Heart left ventricle (tissue), 16 donors: ENCODE measurements at regions of chr7 and their contacts with region 1.

Region 1: DNA sequence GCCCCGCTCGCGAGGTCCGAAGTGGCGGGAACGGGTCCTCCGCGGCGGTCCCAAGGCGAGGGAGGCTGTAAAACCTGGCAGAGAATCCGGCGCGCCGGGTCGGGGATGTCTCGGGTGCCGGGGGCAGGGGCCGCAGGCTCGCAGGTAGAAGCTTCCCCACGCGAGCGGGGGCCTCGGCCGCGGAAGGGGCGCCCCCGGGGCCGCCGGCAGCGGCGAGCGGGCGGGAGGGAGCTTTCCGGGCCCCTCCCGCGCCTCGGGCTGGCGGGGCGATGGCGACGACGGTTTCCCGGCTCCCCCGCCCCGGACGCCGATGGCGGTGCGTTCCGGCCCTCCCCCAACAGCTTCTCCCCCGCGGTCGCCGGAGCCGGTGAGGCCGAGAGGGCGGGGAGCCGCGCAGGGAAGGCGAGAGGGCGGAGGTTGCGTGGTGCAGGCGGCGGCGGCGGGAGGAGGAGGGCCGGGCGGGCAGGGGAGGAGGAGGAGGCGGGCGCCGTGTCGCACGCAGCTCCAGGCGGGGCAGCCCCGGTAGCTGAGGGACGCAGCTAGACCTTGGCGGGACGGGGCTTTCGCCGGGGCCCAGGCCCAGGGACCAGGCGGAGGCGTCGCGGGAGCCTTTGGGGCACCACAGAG is at the start of gene CUL1:
- DNase-seq: peak; percentile 90 to 94 (median 91)
- ATAC-seq: peak; percentile 77 to 95 (median 88)
- H3K4me3 ChIP-seq: peak within 1 kb of the TSS; percentile 76 to 98 (median 87)
- H3K27ac ChIP-seq: peak within 1 kb of the TSS; percentile 92 to 99 (median 97)
- H3K4me1 ChIP-seq: peaks cover 9 to 47% (median 36%) of the 10 kb centered on the region in 12 donors
- H3K27me3 ChIP-seq: no peaks in the 10 kb centered on the region
- CTCF ChIP-seq: peak in 1 of 12 donors; percentile 2
- POLR2A ChIP-seq: peak in 1 of 2 donors; percentile 57
- total RNA-seq, gene CUL1: 39.8 to 58.3 (median 43.6) TPM

Region 2: DNA sequence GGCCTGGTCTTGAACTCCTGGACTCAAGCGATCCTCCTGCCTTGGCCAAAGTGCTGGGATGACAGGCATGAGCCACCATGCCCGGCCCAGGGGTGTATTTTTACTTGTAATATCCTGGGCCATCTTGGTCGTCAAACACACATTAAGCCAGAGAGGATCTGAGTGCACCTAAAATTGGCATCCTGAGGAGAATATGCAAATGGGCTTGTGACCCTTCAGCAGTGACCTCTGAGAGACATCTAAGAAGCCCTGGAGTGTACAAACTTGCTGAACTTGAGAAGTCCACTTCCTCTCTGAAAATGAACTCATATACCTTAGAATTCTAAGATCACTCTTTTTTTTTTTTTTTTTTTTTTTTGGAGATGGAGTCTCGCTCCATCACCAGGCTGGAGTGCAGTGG is 479.9 kb before region 1 on chr7:
- intact Hi-C with region 1: no loop called
- DNase-seq: no peak
- ATAC-seq: no peak
- H3K4me3 ChIP-seq: no peak overlapping the region
- H3K27ac ChIP-seq: no peak overlapping the region
- H3K4me1 ChIP-seq: no peaks in the 10 kb centered on the region
- H3K27me3 ChIP-seq: peaks cover 0 to 3% (median 0%) of the 10 kb centered on the region in 9 donors
- CTCF ChIP-seq: no peak
- POLR2A ChIP-seq: no peak

Region 3: GRCh38 chr7:148575640-148576411 is 122.7 kb before region 1 on chr7:
- intact Hi-C with region 1: loop called in 2 of 10 experiments (anchors 5 to 10 kb)
- DNase-seq: peak; percentile 43 to 73 (median 59)
- ATAC-seq: peak in 3 of 4 donors; percentile 62 to 70 (median 68)
- H3K4me3 ChIP-seq: no peak overlapping the region
- H3K27ac ChIP-seq: no peak overlapping the region
- H3K4me1 ChIP-seq: peaks cover 0 to 9% (median 0%) of the 10 kb centered on the region in 12 donors
- H3K27me3 ChIP-seq: no peaks in the 10 kb centered on the region
- CTCF ChIP-seq: peak; percentile 68 to 86 (median 78)
- POLR2A ChIP-seq: no peak

Region 4: DNA sequence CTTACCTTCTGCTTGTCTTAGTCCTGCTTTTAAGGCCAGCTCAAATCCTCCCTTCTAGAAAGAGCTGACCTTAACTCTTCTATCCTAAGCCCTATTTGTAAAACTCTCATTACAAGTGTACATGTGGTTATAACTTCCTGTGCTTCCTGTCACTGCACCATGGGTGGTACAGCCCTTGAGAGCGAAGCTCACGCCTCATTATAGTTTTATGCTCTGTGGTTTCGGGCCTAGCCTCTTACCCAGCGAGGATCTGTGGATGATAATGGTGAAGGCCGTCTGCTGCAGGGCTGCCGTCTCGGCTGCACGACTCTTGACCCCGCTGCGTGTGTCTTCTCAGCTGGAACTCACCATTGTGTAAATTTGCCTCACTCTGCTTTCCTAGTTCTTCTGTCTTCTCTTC is 74.8 kb after region 1 on chr7:
- intact Hi-C with region 1: loop called in 2 of 10 experiments (anchors 5 to 10 kb)
- DNase-seq: no peak
- ATAC-seq: peak in 1 of 4 donors; percentile 24
- H3K4me3 ChIP-seq: no peak overlapping the region
- H3K27ac ChIP-seq: peak overlapping the region in 1 of 12 donors; percentile 49
- H3K4me1 ChIP-seq: peaks cover 0 to 10% (median 0%) of the 10 kb centered on the region in 12 donors
- H3K27me3 ChIP-seq: no peaks in the 10 kb centered on the region
- CTCF ChIP-seq: no peak
- POLR2A ChIP-seq: no peak

Region 5: DNA sequence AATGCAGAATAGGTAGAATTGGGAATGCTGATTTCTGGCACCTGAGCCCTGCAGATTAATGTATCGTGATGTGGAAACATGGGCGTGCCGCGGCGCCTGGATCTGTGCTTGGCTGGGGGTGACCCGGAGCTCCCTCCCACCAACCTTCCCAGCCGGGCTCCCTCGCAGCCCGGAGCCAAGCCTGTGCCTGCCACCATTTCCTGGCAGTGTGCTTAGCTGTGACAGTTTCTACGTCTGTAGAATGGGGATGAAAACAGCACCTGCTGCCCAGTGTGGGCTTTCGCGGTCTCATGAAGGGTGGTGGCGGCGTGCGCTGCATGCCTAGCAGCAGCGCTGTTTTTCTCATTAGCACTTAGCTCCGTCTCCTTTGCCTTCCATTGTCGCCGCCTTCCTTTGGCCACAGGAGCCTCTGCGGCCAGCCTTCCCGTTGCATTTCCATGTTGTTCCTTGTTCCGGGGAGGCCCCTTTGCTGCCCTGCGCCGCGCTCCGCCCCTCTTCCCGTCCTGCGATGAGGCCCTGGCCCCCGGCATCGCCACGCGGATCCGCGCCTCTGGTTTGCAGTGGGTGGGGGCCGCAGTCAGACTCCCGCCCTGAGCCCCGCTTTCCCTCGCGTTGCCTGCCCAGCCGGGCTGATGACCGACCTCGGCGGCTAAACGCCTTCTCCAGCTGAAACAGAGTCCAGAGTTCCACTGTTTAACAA is 84.4 kb after region 1 on chr7:
- intact Hi-C with region 1: loop called in 3 of 10 experiments (anchors 5 to 10 kb)
- DNase-seq: no peak
- ATAC-seq: no peak
- H3K4me3 ChIP-seq: no peak overlapping the region
- H3K27ac ChIP-seq: no peak overlapping the region
- H3K4me1 ChIP-seq: no peaks in the 10 kb centered on the region
- H3K27me3 ChIP-seq: no peaks in the 10 kb centered on the region
- CTCF ChIP-seq: no peak
- POLR2A ChIP-seq: no peak

Region 6: DNA sequence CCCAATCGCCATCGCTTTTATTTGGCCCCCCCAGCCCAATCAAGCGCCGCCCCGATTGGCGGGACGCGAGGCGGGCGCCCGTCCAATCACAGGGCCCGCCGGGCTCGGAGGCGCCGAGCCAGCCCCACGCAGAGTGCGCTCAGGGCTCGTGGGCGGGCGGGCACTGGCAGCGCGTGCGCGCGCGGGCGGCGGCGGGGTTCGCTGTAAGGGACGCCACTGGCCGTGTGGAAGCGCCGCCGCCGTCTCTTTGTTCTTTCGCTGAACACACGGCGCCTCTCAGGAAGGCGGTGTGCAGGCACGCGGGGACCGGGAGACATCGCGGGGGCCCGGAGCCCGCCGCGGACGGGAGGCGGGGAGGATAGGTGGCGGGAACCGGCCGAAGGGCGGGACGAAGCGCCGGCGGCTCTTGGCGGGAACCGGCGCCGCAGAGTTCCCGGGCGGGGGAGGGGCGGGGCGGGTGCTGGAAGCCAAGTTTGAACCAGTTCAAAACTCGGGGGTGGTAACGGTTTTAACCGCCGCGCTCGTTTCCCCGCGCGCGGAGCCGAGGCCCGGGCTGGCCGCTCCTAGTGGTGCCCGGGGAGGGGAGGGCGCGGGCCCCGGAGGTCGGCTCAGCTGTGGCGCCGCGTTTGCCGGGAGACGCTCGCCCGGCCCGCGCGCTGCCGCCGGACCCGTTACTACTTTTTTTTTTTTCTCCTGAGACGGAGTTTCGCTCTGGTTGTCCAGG is 186.0 kb after region 1 on chr7:
- intact Hi-C with region 1: loop called in 2 of 10 experiments (anchors 2 to 5 kb)
- DNase-seq: peak; percentile 93 to 97 (median 94)
- ATAC-seq: peak; percentile 98 to 100 (median 99)
- H3K4me3 ChIP-seq: peak overlapping the region; percentile 65 to 99 (median 93)
- H3K27ac ChIP-seq: peak overlapping the region; percentile 77 to 98 (median 92)
- H3K4me1 ChIP-seq: peaks cover 0 to 17% (median 4%) of the 10 kb centered on the region in 12 donors
- H3K27me3 ChIP-seq: no peaks in the 10 kb centered on the region
- CTCF ChIP-seq: no peak
- POLR2A ChIP-seq: peak in 1 of 2 donors; percentile 83

Region 7: DNA sequence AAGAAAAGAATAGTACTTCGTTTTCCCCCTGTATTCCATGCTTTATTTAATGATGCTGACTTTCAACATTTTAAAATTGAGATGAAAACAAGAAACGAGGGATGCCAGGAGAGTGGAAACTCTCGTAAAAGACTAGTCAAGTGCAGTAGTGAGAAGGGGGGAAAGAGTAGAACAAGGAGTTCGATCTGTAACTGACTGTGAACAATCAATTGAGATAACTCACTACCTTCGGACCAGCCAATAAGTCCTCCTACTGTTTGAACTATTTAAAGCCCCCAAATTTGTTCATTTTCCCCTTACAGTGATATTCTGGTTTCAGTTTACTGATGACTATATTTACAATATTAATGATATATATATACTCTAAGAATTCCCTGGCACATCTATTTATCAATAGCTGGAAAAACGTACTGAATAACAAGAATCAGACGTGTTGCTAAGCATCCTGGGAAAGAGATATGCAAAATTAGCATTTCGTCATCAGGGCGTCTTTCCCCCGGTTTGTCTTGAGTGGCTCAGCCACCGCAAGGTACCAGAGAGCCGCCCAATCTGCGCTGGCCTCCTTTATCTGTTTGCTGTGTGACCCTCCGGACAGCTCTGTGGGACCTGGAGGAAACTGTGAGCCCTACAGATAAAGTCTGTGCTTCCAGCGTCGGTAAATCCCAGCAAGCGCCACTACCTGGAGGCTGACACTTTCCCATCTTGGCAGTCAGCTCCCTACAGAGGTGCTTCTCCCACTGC is 288.7 kb after region 1 on chr7:
- intact Hi-C with region 1: loop called in 1 of 10 experiments (anchors 2 kb)
- DNase-seq: peak; percentile 77 to 85 (median 81)
- ATAC-seq: peak; percentile 92
- H3K4me3 ChIP-seq: peak overlapping the region; percentile 56 to 84 (median 71)
- H3K27ac ChIP-seq: peak overlapping the region; percentile 53 to 92 (median 77)
- H3K4me1 ChIP-seq: peaks cover 4 to 53% (median 25%) of the 10 kb centered on the region in 12 donors
- H3K27me3 ChIP-seq: no peaks in the 10 kb centered on the region
- CTCF ChIP-seq: no peak
- POLR2A ChIP-seq: peak in 1 of 2 donors; percentile 37

Region 8: GRCh38 chr7:149090397-149091195 is 392.1 kb after region 1 on chr7 and contains the start of gene ZNF786:
- intact Hi-C with region 1: loop called in 1 of 10 experiments (anchors 5 kb)
- DNase-seq: peak; percentile 91 to 95 (median 92)
- ATAC-seq: peak; percentile 93 to 98 (median 96)
- H3K4me3 ChIP-seq: peak within 1 kb of the TSS; percentile 68 to 99 (median 88)
- H3K27ac ChIP-seq: peak within 1 kb of the TSS; percentile 94 to 100 (median 98)
- H3K4me1 ChIP-seq: peaks cover 0 to 30% (median 11%) of the 10 kb centered on the region in 12 donors
- H3K27me3 ChIP-seq: no peaks in the 10 kb centered on the region
- CTCF ChIP-seq: peak; percentile 82 to 96 (median 95)
- POLR2A ChIP-seq: peak in 1 of 2 donors; percentile 84
- total RNA-seq, gene ZNF786: 2.2 to 5.3 (median 3.0) TPM